Activated naive CD4-positive, alpha-beta T cell treated with anti-CD3 and anti-CD28 coated beads, Interleukin-2, amount 10 ng/mL, durations not matched to agents 7 days and 5 days (primary cell): ENCODE measurements at regions of chr1 and their contacts with region 1.

Region 1: DNA sequence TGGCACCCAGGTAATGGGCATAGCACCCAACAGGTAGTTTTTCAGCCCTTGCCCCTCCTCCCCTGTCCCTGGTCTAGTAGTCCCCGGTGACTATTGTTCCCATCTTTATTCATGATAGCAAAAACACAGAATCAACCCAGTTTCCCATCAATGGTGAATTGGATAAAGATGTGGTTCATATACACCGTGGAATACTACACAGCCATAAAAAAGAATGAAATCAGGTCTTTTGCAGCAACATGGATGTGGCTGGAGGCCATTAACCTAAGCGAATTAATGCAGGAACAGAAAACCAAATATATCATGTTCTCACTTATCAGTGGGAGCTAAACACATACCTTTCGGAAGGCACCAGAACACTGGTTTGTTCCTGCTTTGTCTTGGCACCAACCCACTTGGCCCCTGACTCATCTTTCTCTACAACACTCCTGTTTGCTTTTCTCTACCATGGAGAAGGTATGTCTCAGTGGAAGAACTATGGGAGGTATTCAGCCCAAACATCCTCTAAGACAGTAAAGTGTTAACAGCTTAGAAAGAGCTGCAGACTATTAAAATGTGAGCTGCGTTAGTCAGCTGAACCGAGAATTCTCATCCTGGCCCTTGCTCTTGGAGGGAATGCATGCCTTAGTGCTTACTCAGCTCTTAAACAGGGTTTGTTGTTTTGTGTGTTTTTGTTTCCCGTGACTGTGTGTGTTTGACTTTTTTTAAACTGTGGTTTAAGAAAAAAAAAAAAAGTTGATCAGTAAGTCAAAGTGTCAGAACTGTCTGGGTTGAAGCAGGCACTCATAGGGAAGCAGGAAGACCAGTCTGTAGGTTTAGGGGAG is 203.0 kb downstream of the TOMM20 start:
- DNase-seq: no peak
- H3K4me3 Mint-ChIP-seq: peak overlapping the region; percentile 22
- H3K27ac Mint-ChIP-seq: peak overlapping the region; percentile 94
- H3K4me1 Mint-ChIP-seq: peaks cover 48% of the 10 kb centered on the region
- H3K27me3 Mint-ChIP-seq: no peaks in the 10 kb centered on the region

Region 2: DNA sequence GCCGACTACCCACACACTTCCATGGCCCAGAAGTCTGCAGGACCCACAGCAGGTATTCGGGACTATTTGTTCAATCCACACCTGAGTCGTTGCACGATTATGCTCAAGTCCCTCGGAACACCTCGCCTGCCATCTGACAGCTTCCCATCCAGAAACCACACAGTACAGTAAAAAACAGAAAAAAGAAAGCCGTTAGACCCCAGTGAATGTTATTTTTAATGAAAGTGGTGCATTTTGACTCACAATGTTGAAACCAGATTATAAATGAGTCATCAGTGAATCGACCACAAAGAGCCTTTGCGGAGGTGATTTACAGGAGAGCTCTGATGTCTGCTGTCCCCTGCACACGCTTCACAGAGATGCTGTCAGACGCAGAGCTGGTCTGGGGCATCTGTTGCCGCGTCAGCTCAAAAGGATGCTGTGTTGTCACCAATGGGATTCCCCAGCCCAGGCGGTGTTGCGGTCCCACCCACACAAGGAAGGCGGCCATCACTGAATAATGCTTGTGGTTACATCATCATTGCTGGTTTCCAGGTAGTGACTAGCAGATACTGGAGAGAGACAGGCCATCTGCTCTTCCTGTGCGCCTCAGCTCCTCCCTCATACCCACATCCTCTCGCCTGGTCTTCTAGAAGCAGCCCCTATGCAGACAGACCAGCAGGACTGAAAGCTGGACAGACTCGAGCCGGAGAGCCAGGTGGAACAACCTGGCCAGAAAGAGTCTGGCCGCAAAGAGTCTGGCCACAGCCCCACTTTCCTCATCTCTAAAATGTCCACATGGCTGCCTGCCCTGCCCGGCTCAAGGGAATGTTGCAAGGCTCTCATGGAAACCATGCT is 86.2 kb after region 1 on chr1:
- CTCF ChIA-PET with region 1: interaction called, 13 read pairs
- DNase-seq: peak; percentile 97
- H3K4me3 Mint-ChIP-seq: peak overlapping the region; percentile 51
- H3K27ac Mint-ChIP-seq: peak overlapping the region; percentile 92
- H3K4me1 Mint-ChIP-seq: peaks cover 89% of the 10 kb centered on the region
- H3K27me3 Mint-ChIP-seq: no peaks in the 10 kb centered on the region